Thyroid gland (tissue), 4 donors: ENCODE measurements at regions of chr1 and their contacts with region 1.

Region 1: GRCh38 chr1:228734881-228735801 is at the start of gene RHOU:
- DNase-seq: peak; percentile 77 to 81
- H3K4me3 ChIP-seq: peak within 1 kb of the TSS; percentile 71 to 75 (median 74)
- H3K27ac ChIP-seq: peak within 1 kb of the TSS; percentile 88 to 96 (median 95)
- H3K4me1 ChIP-seq: peaks cover 16 to 31% of the 10 kb centered on the region in 2 donors
- H3K27me3 ChIP-seq: no peaks in the 10 kb centered on the region
- CTCF ChIP-seq: peak; percentile 43 to 98 (median 93)
- POLR2A ChIP-seq: peak; percentile 74 to 93
- total RNA-seq, gene RHOU: 18.5 to 38.4 (median 23.5) TPM

Region 2: DNA sequence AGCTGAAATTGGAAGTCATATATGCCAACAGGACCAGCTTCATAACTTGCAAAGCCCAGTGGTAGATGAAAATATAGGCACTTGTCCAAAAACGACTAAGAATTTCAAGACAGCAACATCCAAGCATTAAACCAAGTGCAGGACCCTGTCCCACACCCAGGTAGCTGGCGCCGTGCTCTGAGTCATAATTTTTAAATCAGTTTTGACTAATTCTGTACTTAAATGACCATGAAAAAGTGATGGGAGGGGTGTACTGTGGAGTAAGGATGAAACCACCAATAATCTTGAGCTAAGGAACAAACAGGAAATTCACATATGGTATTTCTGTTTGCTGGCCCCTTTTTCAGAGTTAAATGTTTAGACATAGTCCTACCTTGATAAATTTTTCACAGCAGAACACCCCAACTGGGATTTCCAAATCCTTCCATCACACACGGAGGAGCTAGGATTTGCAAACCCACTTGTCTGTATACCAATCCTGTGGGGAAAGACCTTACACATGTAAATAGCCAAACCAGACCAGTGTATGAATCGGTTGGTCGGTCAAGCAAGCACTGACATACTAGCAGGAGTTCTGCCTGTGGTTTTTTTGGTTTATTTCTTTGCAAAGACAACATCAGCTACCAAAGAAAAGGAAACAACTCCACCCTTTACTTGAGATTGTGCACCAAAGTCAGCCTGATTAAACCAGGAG is 300.1 kb after region 1 on chr1:
- intact Hi-C with region 1: loop called (anchors 10 kb)
- DNase-seq: peak; percentile 39 to 59
- H3K4me3 ChIP-seq: no peak overlapping the region
- H3K27ac ChIP-seq: no peak overlapping the region
- H3K4me1 ChIP-seq: peaks cover 8 to 12% of the 10 kb centered on the region in 2 donors
- H3K27me3 ChIP-seq: no peaks in the 10 kb centered on the region
- CTCF ChIP-seq: no peak
- POLR2A ChIP-seq: no peak

Region 3: DNA sequence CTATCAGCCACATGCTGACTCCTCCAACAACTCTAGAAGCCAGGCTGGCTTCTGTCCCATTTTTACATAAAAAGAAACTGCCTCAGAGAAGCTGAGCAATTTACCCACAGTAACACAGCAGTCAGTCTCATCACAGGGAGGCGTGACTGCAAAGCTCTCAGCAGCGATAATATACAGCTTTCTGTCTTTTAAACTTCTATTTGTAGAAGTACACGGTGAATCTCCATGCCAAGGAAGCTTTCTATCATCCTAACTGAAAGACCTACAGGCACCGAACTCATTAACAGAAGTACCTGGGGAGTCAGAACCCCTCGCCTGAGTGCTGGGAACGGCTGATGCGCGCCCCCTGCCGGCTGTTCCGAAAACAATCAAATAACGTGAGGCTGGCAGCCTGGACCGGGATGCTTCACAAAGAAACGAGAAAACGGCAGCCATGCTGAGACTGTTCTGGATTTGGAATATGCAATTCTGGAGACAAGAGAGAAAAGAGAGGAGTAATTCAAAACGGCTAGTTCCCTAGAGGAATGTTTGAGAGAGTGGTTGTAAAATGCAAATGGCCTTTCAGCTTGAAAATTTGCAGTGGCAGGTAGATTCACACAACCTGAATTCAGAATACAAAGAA is 492.3 kb after region 1 on chr1:
- intact Hi-C with region 1: loop called (anchors 10 kb)
- DNase-seq: peak; percentile 78 to 88
- H3K4me3 ChIP-seq: no peak overlapping the region
- H3K27ac ChIP-seq: peak overlapping the region in 2 of 3 donors; percentile 43 to 95
- H3K4me1 ChIP-seq: peaks cover 36 to 53% of the 10 kb centered on the region in 2 donors
- H3K27me3 ChIP-seq: no peaks in the 10 kb centered on the region
- CTCF ChIP-seq: peak; percentile 82 to 93 (median 88)
- POLR2A ChIP-seq: no peak